ENCODE measurements at regions of chr9 and their contacts with region 1.

Region 1: DNA sequence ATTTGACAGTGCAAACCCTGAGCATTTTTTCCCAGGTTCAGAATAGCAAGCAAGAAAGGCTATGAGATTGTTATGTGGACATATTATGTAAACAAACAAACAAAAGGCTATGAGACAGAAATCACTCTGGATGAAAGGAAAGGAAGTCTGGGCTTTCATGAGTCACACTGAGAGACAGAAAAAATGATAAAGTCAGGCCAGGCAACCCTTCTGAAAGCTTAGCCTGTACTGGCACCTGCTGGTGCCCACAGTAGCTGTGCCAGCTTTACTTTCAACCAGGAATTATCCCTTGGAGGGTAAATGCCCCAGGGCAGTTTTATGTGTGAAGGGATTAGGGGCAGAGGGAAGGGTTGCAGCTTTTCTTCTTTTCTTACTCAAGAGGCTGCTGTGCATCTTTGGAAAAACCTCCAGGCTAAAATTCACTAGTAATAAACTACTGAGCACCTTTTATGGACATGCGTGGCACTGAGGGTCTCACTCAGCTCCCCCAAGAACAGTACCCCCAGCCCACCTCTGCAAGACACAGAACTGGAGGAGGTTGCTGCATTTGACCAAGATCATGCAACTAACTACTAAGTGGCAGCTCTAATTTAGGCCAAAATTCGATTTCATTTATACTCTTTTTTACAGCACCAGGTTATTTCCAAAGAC is 41.7 kb downstream of the ACTL7B start:
- DNase-seq: peak; percentile 10
- H3K4me3 ChIP-seq: no peak overlapping the region
- CTCF ChIP-seq: peak; percentile 13

Region 2: DNA sequence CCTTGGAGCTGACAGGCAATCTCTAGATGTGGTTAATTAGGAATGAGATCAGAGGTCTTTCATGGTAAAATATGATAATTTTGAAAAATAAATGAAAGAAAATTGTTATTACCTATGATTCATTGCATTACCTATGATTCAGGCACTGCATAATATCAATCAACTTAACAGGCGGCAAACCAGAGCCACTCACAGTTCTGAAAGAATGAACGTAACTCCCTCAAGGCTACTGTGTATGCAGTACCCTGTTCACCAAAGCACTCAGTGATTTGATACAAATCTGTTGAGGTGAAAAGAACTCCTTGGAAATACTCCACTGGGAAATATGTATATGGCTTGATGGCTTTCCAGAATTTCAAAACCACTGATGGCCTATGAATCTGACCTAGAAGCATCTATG is 357.2 kb before region 1 on chr9:
- CTCF ChIA-PET with region 1: no interaction called
- POLR2A ChIA-PET with region 1: no interaction called
- DNase-seq: no peak
- H3K4me3 ChIP-seq: no peak overlapping the region
- CTCF ChIP-seq: no peak

Region 3: GRCh38 chr9:108803428-108804065 is 10.5 kb before region 1 on chr9:
- CTCF ChIA-PET with region 1: interaction called, 10 read pairs
- POLR2A ChIA-PET with region 1: no interaction called
- DNase-seq: no peak
- H3K4me3 ChIP-seq: no peak overlapping the region
- CTCF ChIP-seq: no peak

Region 4: GRCh38 chr9:108850293-108850897 is 36.3 kb after region 1 on chr9:
- CTCF ChIA-PET with region 1: no interaction called
- POLR2A ChIA-PET with region 1: no interaction called
- DNase-seq: no peak
- H3K4me3 ChIP-seq: no peak overlapping the region
- CTCF ChIP-seq: peak; percentile 30